Heart left ventricle (tissue), 16 donors: ENCODE measurements at regions of chr7 and their contacts with region 1.

Region 1: GRCh38 chr7:16431646-16432424 is 10.5 kb upstream of the CRPPA start:
- DNase-seq: no peak
- ATAC-seq: peak in 3 of 4 donors; percentile 45 to 76 (median 62)
- H3K4me3 ChIP-seq: no peak overlapping the region
- H3K27ac ChIP-seq: no peak overlapping the region
- H3K4me1 ChIP-seq: no peaks in the 10 kb centered on the region
- H3K27me3 ChIP-seq: no peaks in the 10 kb centered on the region
- CTCF ChIP-seq: peak; percentile 23 to 61 (median 48)
- POLR2A ChIP-seq: no peak

Region 2: DNA sequence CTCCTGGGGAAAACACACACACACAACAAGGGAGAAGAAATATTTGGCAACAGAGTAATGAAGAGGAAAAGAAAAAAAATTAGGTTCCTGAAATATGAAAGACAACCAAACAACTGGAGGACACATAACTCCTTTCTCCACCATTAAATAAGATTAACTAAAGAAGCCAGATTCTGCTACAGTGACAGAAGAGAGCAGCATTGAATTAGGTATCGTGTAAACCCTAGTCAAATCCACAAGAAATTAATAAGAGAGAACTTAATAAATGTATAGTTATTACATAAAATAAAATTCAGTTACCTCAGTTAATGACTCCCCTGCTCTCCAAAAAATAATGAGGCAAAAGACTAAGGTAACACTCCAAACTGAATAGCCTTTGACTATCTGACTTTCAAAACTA is 317.2 kb before region 1 on chr7:
- intact Hi-C with region 1: loop called in 8 of 10 experiments (anchors 5 to 10 kb)
- DNase-seq: no peak
- ATAC-seq: peak in 1 of 4 donors; percentile 46
- H3K4me3 ChIP-seq: no peak overlapping the region
- H3K27ac ChIP-seq: no peak overlapping the region
- H3K4me1 ChIP-seq: no peaks in the 10 kb centered on the region
- H3K27me3 ChIP-seq: no peaks in the 10 kb centered on the region
- CTCF ChIP-seq: peak; percentile 16 to 62 (median 46)
- POLR2A ChIP-seq: no peak